ENCODE measurements at regions of chr3 and their contacts with region 1.

Region 1: GRCh38 chr3:172179680-172180399 is 140.5 kb downstream of the FNDC3B start:
- DNase-seq: peak; percentile 38
- CTCF ChIP-seq: no peak

Region 2: DNA sequence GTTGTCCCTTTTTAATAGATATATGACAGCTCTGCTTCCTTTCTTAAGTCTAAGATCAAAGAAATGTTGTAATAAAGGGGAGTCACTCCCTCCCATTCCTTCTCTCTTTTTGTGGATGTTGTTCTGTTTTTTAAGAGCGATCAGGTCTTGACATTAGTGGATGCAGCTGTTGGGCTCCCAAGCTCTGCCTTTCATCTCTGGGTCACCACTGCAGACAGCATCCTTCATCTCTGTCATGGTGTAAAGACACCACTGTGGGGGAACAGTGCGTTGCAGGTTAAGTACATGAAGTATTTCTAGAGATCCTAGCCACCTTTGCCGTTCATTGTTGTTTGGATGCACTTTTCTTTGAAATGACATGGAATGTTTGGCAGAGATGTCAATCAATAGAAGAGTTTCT is 122.8 kb before region 1 on chr3:
- CTCF ChIA-PET with region 1: no interaction called
- POLR2A ChIA-PET with region 1: no interaction called
- DNase-seq: no peak
- CTCF ChIP-seq: no peak

Region 3: DNA sequence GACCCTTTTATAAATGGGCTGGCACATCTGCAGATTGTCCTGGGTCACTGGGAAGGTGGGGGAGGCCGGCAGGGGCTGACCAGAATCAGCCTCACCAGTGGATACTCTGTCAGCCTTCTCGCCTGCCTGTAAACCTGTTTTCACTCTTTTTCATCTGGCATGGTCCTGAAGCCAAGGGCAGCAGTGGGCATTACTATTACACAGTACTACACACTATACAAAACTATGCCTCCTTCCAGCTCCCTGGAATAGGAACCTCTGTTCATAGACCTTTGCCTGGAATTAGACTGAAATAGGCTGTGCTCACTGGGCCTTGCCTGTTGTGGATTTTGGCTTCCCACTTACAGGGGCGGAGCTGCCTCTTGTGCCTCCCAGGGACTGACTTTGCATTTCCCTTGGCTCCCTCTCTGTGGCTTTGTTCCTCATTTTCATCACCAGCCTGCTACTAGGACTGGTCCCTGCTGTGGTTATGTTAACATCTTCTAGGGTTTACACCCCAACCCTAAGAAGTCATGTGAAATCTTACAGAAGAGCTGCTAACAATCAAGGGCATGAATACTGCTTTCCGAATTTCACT is 19.8 kb before region 1 on chr3:
- CTCF ChIA-PET with region 1: interaction called, 15 read pairs
- POLR2A ChIA-PET with region 1: no interaction called
- DNase-seq: no peak
- CTCF ChIP-seq: no peak

Region 4: DNA sequence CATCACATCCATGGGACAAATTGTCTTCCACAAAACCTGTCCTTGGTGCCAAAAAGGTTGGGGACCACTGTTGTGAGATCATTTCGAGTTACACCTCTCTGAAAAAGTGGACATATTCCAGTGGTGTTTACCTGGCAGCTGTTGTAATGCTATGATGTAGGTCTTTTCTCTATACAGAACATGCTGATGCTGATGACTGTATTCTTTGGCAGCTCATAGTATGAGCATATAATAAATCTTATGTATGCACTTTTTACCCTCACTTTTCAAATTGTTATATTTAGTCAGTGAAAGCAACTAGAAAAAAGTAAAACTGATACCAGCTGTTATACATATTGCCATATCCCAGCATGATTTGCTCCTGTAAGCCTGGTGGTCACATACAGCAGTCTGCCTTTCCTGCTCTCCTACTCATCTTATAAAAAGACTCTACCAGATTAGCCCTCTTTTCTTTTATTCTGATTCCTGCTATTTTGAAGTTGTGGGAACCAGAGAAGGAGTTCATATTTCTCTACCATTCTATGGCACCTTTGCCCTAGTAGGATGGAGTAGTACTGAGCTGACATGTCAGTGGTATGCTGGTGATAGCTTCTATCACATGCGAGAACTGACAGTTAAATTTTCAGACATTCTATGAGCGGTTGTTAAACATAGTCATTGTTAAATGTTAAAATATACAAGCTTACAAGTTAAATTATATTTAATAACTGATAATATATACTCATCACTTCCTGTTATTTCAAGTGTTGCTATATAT is 11.8 kb before region 1 on chr3:
- CTCF ChIA-PET with region 1: interaction called, 15 read pairs
- POLR2A ChIA-PET with region 1: no interaction called
- DNase-seq: no peak
- CTCF ChIP-seq: no peak

Region 5: GRCh38 chr3:172224560-172225214 is 44.8 kb after region 1 on chr3:
- CTCF ChIA-PET with region 1: no interaction called
- POLR2A ChIA-PET with region 1: no interaction called
- DNase-seq: no peak
- CTCF ChIP-seq: no peak

Region 6: GRCh38 chr3:172256101-172256734 is 76.4 kb after region 1 on chr3:
- CTCF ChIA-PET with region 1: no interaction called
- POLR2A ChIA-PET with region 1: no interaction called
- DNase-seq: no peak
- CTCF ChIP-seq: no peak